PC-9 (cell line): ENCODE measurements at regions of chr6 and their contacts with region 1.

Region 1: GRCh38 chr6:51654647-51655046 is 432.8 kb downstream of the PKHD1 start:
- DNase-seq: no peak
- H3K4me3 ChIP-seq: no peak overlapping the region
- H3K27ac ChIP-seq: no peak overlapping the region
- H3K4me1 ChIP-seq: no peaks in the 10 kb centered on the region
- H3K27me3 ChIP-seq: no peaks in the 10 kb centered on the region
- CTCF ChIP-seq: no peak

Region 2: GRCh38 chr6:52180787-52181558 is 526.3 kb after region 1 on chr6:
- CTCF ChIA-PET with region 1: no interaction called
- POLR2A ChIA-PET with region 1: no interaction called
- intact Hi-C with region 1: loop called (anchors 5 kb)
- DNase-seq: no peak
- H3K4me3 ChIP-seq: no peak overlapping the region
- H3K27ac ChIP-seq: no peak overlapping the region
- H3K4me1 ChIP-seq: no peaks in the 10 kb centered on the region
- H3K27me3 ChIP-seq: peaks cover 24% of the 10 kb centered on the region
- CTCF ChIP-seq: no peak